Mammary epithelial cell (primary cell): ENCODE measurements at regions of chr1 and their contacts with region 1.

Region 1: GRCh38 chr1:29639741-29640427 is 403.6 kb downstream of the PTPRU start:
- DNase-seq: peak; percentile 81
- H3K4me3 ChIP-seq: no peak overlapping the region
- H3K27ac ChIP-seq: peak overlapping the region; percentile 23
- H3K4me1 ChIP-seq: peaks cover 27% of the 10 kb centered on the region
- H3K27me3 ChIP-seq: no peaks in the 10 kb centered on the region
- CTCF ChIP-seq: no peak

Region 2: GRCh38 chr1:29490204-29490934 is 149.5 kb before region 1 on chr1:
- CTCF ChIA-PET with region 1: no interaction called
- dilution Hi-C with region 1: no loop called
- in situ Hi-C with region 1: no loop called
- intact Hi-C with region 1: no loop called
- DNase-seq: no peak
- H3K4me3 ChIP-seq: no peak overlapping the region
- H3K27ac ChIP-seq: no peak overlapping the region
- H3K4me1 ChIP-seq: no peaks in the 10 kb centered on the region
- H3K27me3 ChIP-seq: no peaks in the 10 kb centered on the region
- CTCF ChIP-seq: peak in 1 of 2 donors; percentile 6

Region 3: DNA sequence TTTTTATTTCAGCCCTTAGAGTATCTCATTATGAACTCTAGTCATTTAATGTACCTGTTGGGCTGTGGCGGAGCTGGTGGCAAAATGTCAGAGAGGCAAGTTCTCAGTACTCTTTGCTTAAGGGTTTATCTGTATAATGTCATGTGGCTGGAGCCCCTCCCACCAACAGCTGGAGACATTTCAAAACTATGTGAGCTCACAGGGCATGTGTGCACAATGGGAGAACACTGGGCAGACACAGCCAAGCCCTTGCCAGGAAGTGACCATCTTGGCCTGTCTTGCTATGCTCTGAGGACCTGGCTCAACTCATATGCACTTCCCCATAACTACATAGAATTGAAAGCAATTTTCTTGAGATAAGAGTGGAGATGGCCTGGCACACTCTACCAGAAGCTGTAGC is 107.1 kb before region 1 on chr1:
- CTCF ChIA-PET with region 1: no interaction called
- dilution Hi-C with region 1: no loop called
- in situ Hi-C with region 1: no loop called
- intact Hi-C with region 1: no loop called
- DNase-seq: no peak
- H3K4me3 ChIP-seq: no peak overlapping the region
- H3K27ac ChIP-seq: no peak overlapping the region
- H3K4me1 ChIP-seq: no peaks in the 10 kb centered on the region
- H3K27me3 ChIP-seq: no peaks in the 10 kb centered on the region
- CTCF ChIP-seq: no peak

Region 4: DNA sequence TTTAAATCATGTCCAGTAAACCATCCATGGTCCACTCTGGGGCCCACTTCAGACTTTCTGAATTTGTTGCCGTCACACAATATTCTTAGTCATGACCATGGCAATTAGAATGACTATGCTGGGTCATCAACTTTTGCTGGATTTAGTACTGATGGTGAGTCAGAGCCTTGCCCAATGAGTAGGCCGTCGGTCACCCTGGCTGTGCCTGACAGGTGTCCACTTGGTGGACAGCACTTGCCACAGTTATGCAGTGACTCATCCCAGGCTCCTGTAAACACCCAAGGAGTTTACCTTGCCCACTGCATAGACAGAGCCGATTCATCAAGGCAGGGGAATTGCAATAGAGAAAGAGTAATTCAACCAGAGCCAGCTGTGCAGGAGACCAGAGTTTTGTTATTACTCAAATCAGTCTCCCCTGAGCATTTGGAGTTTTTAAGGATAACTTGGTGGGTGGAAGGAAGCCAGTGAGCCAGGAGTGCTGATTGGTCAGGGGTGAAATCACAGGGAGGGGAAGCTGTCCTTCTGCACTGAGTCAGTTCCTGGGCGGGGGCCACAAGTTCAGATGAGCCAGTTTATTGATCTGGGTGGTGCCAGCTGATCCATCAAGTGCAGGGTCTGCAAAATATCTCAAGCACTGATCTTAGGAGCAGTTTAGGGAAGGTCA is 69.8 kb before region 1 on chr1:
- CTCF ChIA-PET with region 1: no interaction called
- dilution Hi-C with region 1: no loop called
- in situ Hi-C with region 1: loop called in 1 of 2 experiments (anchors 10 kb)
- intact Hi-C with region 1: no loop called
- DNase-seq: peak; percentile 100
- H3K4me3 ChIP-seq: no peak overlapping the region
- H3K27ac ChIP-seq: peak overlapping the region; percentile 59
- H3K4me1 ChIP-seq: peaks cover 47% of the 10 kb centered on the region
- H3K27me3 ChIP-seq: no peaks in the 10 kb centered on the region
- CTCF ChIP-seq: no peak

Region 5: DNA sequence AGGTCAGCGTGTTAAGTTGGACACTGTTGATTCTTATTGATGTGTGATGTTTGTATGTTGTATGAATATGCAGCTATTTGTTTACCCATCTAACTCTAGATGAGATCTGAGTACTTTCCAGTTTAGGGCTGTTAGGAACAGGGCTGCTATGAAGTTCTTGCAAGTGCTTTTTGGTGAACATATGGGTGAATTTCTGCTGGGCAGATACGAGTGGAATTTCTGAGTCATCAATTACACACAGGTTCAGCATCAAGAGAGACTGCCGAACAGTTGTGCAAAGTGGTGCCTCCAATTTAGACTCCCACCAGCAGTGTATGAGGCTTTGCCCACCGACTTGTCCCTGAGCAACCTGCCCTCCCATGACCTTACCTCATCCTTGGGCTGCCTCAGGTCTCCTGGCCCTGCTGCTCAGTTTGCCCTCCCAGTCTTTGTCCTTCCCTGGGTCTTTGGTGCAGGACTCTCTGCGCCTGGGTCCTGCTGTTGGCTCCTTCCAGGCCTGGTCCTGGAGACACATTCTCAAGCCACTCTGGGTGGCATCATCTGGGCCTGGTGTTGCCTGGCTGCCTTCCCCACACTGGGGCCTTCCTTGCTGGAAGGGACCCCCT is 60.0 kb before region 1 on chr1:
- CTCF ChIA-PET with region 1: no interaction called
- dilution Hi-C with region 1: no loop called
- in situ Hi-C with region 1: loop called in 1 of 2 experiments (anchors 10 kb)
- intact Hi-C with region 1: loop called (anchors 5 kb)
- DNase-seq: peak; percentile 65
- H3K4me3 ChIP-seq: no peak overlapping the region
- H3K27ac ChIP-seq: no peak overlapping the region
- H3K4me1 ChIP-seq: peaks cover 68% of the 10 kb centered on the region
- H3K27me3 ChIP-seq: no peaks in the 10 kb centered on the region
- CTCF ChIP-seq: no peak

Region 6: GRCh38 chr1:29698033-29698432 is 58.1 kb after region 1 on chr1:
- CTCF ChIA-PET with region 1: no interaction called
- dilution Hi-C with region 1: no loop called
- in situ Hi-C with region 1: no loop called
- intact Hi-C with region 1: no loop called
- DNase-seq: peak; percentile 51
- H3K4me3 ChIP-seq: no peak overlapping the region
- H3K27ac ChIP-seq: no peak overlapping the region
- H3K4me1 ChIP-seq: no peaks in the 10 kb centered on the region
- H3K27me3 ChIP-seq: no peaks in the 10 kb centered on the region
- CTCF ChIP-seq: peak; percentile 63 to 67